Prostate gland (tissue), 2 donors: ENCODE measurements at regions of chr3 and their contacts with region 1.

Region 1: GRCh38 chr3:14921078-14921616 is 26.2 kb upstream of the NR2C2 start:
- DNase-seq: peak; percentile 79
- H3K4me3 ChIP-seq: no peak overlapping the region
- H3K27ac ChIP-seq: no peak overlapping the region
- H3K4me1 ChIP-seq: no peaks in the 10 kb centered on the region
- H3K27me3 ChIP-seq: no peaks in the 10 kb centered on the region
- CTCF ChIP-seq: peak; percentile 94 to 99 (median 96)
- POLR2A ChIP-seq: no peak

Region 2: GRCh38 chr3:13932578-13933295 is 988.4 kb before region 1 on chr3:
- intact Hi-C with region 1: no loop called
- DNase-seq: no peak
- H3K4me3 ChIP-seq: peak overlapping the region; percentile 9 to 22
- H3K27ac ChIP-seq: no peak overlapping the region
- H3K4me1 ChIP-seq: no peaks in the 10 kb centered on the region
- H3K27me3 ChIP-seq: no peaks in the 10 kb centered on the region
- CTCF ChIP-seq: no peak
- POLR2A ChIP-seq: no peak

Region 3: DNA sequence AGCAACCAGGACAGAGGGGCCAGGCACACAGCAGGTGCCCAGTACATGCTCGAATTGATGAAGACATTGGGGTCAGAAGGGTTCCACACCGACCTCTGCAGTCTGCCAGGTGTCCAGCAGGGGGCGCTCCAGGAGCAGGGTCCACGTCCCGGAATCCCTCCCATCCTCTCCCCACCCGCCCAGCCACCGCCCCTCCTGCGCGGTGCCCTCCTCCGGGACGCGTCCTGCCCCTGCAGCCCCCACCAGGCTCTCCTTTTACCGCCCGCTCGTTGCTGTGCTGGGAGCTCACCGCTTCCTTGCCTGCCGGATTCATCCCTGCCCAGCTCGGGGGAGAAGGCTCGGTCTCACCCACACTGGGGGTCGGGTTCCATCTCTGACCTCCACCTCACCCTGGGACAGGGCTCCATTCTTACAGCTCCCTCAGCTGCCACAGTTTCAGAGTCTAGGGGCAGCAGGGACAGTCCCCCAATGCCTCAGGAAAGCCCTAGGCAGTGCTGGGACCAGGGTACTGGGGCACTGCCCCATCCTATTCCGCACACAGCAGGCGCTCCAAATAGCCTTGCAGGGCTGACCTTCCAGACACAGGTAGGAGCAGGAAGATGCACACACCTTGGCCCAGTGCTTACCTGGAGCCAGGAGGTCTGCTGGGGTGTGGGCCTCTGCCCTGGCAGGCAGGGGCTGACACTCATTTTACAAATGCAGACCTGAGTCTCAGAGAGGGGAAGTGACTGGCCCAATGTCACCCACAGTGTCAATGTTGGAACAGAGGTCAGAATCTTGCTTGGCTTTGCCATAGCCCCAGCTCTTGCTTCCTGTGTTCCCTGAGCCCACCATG is 412.0 kb before region 1 on chr3:
- intact Hi-C with region 1: loop called (anchors 2 kb)
- DNase-seq: peak; percentile 33
- H3K4me3 ChIP-seq: no peak overlapping the region
- H3K27ac ChIP-seq: no peak overlapping the region
- H3K4me1 ChIP-seq: no peaks in the 10 kb centered on the region
- H3K27me3 ChIP-seq: no peaks in the 10 kb centered on the region
- CTCF ChIP-seq: peak; percentile 76 to 98 (median 86)
- POLR2A ChIP-seq: no peak

Region 4: DNA sequence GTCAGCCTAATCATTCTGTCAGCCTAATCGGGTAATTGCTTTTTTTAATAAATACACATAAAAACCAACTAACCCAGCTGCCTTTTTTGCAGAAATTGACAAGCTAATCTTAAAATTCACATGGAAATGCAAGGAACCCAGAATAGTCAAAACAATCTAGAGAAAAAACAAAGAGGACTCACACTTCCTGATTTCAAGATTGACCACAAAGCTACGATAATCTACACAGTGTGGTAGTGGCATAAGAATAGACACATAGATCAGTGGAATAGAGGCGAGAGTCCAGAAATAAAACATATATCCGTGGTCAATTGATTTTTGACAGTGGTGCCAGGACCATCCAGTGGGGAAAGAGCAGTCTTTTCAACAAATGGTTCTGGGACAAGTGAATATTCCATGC is 248.6 kb before region 1 on chr3:
- intact Hi-C with region 1: loop called (anchors 2 kb)
- DNase-seq: no peak
- H3K4me3 ChIP-seq: no peak overlapping the region
- H3K27ac ChIP-seq: no peak overlapping the region
- H3K4me1 ChIP-seq: no peaks in the 10 kb centered on the region
- H3K27me3 ChIP-seq: no peaks in the 10 kb centered on the region
- CTCF ChIP-seq: no peak
- POLR2A ChIP-seq: no peak

Region 5: GRCh38 chr3:14793126-14793857 is 127.9 kb before region 1 on chr3:
- intact Hi-C with region 1: loop called (anchors 2 kb)
- DNase-seq: no peak
- H3K4me3 ChIP-seq: no peak overlapping the region
- H3K27ac ChIP-seq: no peak overlapping the region
- H3K4me1 ChIP-seq: no peaks in the 10 kb centered on the region
- H3K27me3 ChIP-seq: no peaks in the 10 kb centered on the region
- CTCF ChIP-seq: no peak
- POLR2A ChIP-seq: no peak

Region 6: GRCh38 chr3:15042936-15043335 is 121.8 kb after region 1 on chr3:
- intact Hi-C with region 1: loop called (anchors 5 kb)
- DNase-seq: no peak
- H3K4me3 ChIP-seq: no peak overlapping the region
- H3K27ac ChIP-seq: no peak overlapping the region
- H3K4me1 ChIP-seq: peaks cover 4% of the 10 kb centered on the region
- H3K27me3 ChIP-seq: no peaks in the 10 kb centered on the region
- CTCF ChIP-seq: no peak
- POLR2A ChIP-seq: no peak